PC-3 (cell line): ENCODE measurements at regions of chr7 and their contacts with region 1.

Region 1: GRCh38 chr7:7959979-7960670 is 8.5 kb upstream of the GLCCI1 start:
- DNase-seq: no peak
- ATAC-seq: no peak
- H3K4me3 ChIP-seq: no peak overlapping the region
- H3K27ac ChIP-seq: no peak overlapping the region
- H3K4me1 ChIP-seq: peaks cover 30% of the 10 kb centered on the region
- H3K27me3 ChIP-seq: no peaks in the 10 kb centered on the region
- CTCF ChIP-seq: no peak

Region 2: DNA sequence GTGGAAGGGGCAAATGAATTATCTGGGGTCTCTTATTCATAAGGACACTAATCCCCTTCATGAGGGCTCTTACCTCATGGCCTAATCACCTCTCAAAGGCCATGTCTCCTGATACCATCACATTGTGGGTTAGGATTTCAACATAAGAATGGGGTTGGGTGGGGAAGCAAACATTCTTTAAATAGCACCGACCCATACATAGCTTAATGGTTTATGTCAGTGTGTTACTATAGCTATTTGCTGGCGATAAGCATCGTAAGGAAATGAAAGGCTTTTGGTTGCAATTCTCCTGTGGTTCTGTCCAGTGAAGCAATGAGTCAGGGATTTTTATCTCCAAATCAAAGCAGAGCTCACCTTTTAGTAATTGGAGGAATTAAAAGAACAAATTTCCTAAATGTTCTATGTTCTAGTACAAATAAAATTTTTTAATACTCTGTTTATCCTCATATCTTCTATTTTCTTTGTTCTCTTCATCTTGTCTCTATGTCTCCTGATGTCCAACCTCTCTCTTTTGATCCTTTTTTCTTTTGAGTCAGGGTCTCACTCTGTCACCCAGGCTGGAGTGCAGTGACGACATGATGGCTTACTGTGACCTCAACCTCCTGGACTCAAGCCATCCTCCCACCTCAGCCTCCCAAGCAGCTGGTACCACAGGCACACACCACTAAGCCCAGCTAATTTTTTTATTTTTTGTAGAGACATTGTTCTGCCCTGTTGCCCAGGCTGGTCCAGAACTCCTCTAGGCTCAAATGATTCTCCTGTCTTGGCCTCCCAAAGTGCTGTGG is 48.6 kb before region 1 on chr7:
- CTCF ChIA-PET with region 1: no interaction called
- POLR2A ChIA-PET with region 1: interaction called, 7 read pairs
- intact Hi-C with region 1: loop called (anchors 5 kb)
- DNase-seq: peak; percentile 87
- ATAC-seq: peak; percentile 81
- H3K4me3 ChIP-seq: no peak overlapping the region
- H3K27ac ChIP-seq: peak overlapping the region; percentile 70
- H3K4me1 ChIP-seq: peaks cover 34% of the 10 kb centered on the region
- H3K27me3 ChIP-seq: no peaks in the 10 kb centered on the region
- CTCF ChIP-seq: no peak